Left ventricle myocardium inferior (tissue), 1 donor: ENCODE measurements at regions of chr1 and their contacts with region 1.

Region 1: GRCh38 chr1:226736908-226737818 is 1.9 kb downstream of the ITPKB start:
- DNase-seq: peak; percentile 39
- H3K4me3 ChIP-seq: peak overlapping the region; percentile 89
- H3K27ac ChIP-seq: peak overlapping the region; percentile 91
- H3K4me1 ChIP-seq: peaks cover 73% of the 10 kb centered on the region
- H3K27me3 ChIP-seq: no peaks in the 10 kb centered on the region
- CTCF ChIP-seq: peak; percentile 29

Region 2: GRCh38 chr1:226649780-226650179 is 87.4 kb before region 1 on chr1:
- intact Hi-C with region 1: loop called (anchors 10 kb)
- DNase-seq: peak; percentile 19
- H3K4me3 ChIP-seq: no peak overlapping the region
- H3K27ac ChIP-seq: no peak overlapping the region
- H3K4me1 ChIP-seq: peaks cover 29% of the 10 kb centered on the region
- H3K27me3 ChIP-seq: no peaks in the 10 kb centered on the region
- CTCF ChIP-seq: peak; percentile 46

Region 3: DNA sequence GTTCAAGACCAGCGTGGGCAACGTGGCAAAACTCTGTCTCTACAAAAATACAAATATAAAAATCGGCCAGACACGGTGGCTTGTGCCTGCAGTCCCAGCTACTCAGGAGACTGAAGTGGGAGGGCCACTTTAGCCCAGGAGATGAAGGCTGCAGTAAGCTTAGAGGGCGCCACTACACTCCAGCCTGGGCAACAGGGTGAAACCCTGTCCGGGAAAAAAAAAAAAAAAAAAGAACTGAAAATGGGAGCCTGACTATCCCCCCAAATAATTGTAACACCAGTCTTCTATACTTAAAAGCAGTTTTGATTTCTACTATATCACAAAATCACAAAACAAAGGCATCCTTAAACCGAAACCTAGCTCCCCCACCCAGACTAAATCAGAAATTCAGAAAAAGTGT is 520.8 kb after region 1 on chr1:
- intact Hi-C with region 1: no loop called
- DNase-seq: no peak
- H3K4me3 ChIP-seq: no peak overlapping the region
- H3K27ac ChIP-seq: no peak overlapping the region
- H3K4me1 ChIP-seq: peaks cover 40% of the 10 kb centered on the region
- H3K27me3 ChIP-seq: no peaks in the 10 kb centered on the region
- CTCF ChIP-seq: no peak